ENCODE measurements at regions of chr16 and their contacts with region 1.

Region 1: GRCh38 chr16:57000271-57001025 is 11.1 kb downstream of the NLRC5 start:
- DNase-seq: peak; percentile 86
- H3K4me3 Mint-ChIP-seq: peak overlapping the region; percentile 64
- H3K27ac Mint-ChIP-seq: peak overlapping the region; percentile 99
- H3K4me1 Mint-ChIP-seq: peaks cover 95% of the 10 kb centered on the region
- H3K27me3 Mint-ChIP-seq: no peaks in the 10 kb centered on the region

Region 2: DNA sequence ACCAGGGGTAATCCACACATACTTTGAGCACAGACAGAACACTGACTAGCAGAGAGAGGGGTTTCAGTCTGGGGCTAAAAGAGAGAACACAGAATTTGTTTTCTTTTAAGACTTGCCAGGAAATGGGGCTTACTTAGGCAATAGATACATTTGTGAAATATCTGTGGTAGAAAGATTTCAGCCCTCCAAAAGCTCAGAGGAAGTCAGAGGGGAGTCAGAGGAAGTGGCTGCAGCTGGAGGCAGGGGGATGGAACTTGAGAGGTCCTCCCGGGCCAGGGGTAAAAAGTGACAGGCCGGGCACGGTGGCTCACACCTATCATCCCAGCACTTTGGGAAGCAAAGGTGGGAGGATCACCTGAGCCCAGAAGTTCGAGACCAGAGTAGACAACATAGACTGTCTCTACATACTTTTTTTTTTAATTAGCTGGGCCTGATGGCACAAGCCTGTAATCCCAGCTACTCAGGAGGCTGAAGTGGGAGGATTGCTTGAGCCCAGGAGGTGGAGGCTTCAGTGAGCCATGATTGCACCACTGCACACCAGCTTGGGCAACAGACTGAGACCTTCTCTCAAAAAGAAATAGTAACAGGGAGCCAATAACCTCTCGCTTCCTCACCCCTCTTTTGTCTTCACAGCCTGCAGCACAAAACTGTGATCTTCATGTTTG is 38.8 kb after region 1 on chr16:
- CTCF ChIA-PET with region 1: interaction called, 10 read pairs
- POLR2A ChIA-PET with region 1: interaction called, 19 read pairs
- intact Hi-C with region 1: loop called (anchors 1 kb)
- DNase-seq: peak; percentile 65
- H3K4me3 Mint-ChIP-seq: peak overlapping the region; percentile 27
- H3K27ac Mint-ChIP-seq: peak overlapping the region; percentile 98
- H3K4me1 Mint-ChIP-seq: peaks cover 88% of the 10 kb centered on the region
- H3K27me3 Mint-ChIP-seq: no peaks in the 10 kb centered on the region

Region 3: DNA sequence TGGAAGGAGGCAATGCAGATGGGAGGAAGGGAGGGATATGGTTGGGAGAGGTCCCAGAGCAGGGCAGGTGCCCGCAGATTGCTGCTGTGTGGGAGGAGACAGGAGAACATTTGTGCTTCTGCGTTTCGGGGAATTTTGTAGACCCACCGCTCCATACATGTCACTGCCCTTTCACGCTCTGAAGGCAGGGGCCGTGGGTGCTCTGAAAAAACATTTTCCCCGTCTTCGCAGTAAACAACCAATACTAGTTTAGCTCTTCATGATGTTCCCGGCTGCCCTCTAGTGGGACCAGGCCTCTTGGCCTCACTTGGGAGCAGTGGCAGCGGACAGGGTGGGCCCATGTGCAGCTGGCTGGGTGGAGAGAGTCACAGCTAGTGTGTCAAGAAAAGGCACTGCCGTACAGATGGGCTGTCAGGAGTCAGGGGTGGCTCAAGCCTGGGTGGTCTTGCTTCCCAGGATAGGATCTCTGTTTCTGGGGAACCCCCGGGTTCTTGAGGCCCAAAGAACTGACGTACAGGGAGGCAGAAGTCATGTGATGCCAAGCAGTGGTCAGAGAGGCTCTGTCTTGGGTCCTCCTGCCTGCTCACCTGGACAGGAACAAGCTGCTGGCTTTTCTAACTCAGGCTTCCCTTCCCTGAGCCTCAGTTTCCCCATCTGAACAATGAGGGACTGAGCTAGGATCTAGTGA is 45.4 kb after region 1 on chr16:
- CTCF ChIA-PET with region 1: interaction called, 10 read pairs
- POLR2A ChIA-PET with region 1: interaction called, 19 read pairs
- intact Hi-C with region 1: loop called (anchors 1 kb)
- DNase-seq: peak; percentile 43
- H3K4me3 Mint-ChIP-seq: no peak overlapping the region
- H3K27ac Mint-ChIP-seq: peak overlapping the region; percentile 64
- H3K4me1 Mint-ChIP-seq: peaks cover 57% of the 10 kb centered on the region
- H3K27me3 Mint-ChIP-seq: no peaks in the 10 kb centered on the region

Region 4: DNA sequence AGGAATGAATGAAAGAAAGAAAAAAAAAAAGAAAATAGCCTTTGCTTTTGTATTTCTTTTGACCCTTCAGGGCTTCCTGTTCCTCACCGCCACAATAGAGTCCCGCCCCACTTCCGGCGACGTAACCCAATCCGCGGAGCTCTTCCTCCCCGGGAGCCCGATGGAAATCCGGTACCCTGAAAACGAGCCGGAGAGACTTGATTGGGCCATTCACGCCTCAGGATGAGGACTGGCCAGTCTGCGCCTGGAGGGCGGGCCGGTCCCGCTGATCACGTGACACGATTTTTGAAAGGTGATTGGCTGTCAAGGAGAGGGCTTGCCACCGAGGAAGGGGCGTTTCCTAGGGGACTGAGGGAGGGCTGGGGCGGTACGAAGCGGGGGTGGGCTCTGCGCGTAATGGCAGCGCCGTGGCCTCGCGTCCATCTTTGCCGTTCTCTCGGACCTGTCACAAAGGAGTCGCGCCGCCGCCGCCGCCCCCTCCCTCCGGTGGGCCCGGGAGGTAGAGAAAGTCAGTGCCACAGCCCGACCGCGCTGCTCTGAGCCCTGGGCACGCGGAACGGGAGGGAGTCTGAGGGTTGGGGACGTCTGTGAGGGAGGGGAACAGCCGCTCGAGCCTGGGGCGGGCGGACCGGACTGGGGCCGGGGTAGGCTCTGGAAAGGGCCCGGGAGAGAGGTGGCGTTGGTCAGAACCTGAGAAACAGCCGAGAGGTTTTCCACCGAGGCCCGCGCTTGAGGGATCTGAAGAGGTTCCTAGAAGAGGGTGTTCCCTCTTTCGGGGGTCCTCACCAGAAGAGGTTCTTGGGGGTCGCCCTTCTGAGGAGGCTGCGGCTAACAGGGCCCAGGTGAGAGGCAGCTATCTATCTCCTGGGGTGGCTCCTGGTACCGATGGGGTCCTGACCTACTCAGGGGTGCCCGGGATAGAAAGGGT is 185.8 kb after region 1 on chr16 and contains the starts of genes PSME3IP1 and RSPRY1:
- CTCF ChIA-PET with region 1: no interaction called
- POLR2A ChIA-PET with region 1: no interaction called
- intact Hi-C with region 1: no loop called
- DNase-seq: peak; percentile 100
- H3K4me3 Mint-ChIP-seq: peak within 1 kb of the TSS; percentile 92
- H3K27ac Mint-ChIP-seq: peak within 1 kb of the TSS; percentile 81
- H3K4me1 Mint-ChIP-seq: peaks cover 36% of the 10 kb centered on the region
- H3K27me3 Mint-ChIP-seq: no peaks in the 10 kb centered on the region
- total RNA-seq, gene PSME3IP1: 101 to 102 TPM
- total RNA-seq, gene RSPRY1: 31.5 to 33.3 TPM